Activated B cell treated with CpG ODN at 0.5 μM for 24 hours (primary cell): ENCODE measurements at regions of chr15 and their contacts with region 1.

Region 1: DNA sequence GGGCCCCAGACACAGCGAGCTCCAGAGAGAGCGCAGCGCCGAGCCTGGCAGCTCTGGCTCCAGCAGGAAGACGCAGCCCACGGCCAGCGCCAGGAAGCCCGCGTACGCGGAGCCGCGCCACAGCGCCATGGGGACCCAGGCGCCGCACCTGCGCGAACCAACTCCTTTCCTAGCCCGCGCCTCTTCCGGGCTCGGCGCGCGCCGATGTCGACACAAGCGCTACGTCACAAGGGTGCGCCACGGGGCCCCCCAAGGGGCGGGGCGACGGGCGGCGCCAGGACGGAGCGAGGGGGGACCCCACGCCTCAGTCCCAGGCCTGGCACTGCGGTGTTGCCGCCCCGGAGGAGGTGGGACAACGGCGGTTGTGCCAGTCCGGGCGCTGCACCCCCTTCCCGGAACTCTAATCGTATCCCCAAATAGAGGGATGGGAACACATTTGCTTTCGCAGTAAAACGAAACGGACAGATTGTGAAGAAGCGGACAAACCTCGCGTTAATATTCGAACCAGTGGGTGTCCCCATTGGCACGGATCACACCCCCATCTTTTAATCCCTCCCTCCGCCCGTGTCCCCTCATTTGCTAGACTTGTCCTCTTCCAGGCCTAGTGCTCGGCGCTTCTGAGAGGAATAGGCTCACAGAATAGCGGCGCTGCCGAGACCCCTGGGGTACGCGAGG is at the start of gene ADPGK:
- DNase-seq: peak; percentile 100
- ATAC-seq: peak; percentile 84
- H3K4me3 Mint-ChIP-seq: peak within 1 kb of the TSS; percentile 94
- H3K27ac Mint-ChIP-seq: peak within 1 kb of the TSS; percentile 99
- H3K4me1 Mint-ChIP-seq: peaks cover 46% of the 10 kb centered on the region
- H3K27me3 Mint-ChIP-seq: no peaks in the 10 kb centered on the region
- CTCF ChIP-seq: no peak
- total RNA-seq, gene ADPGK: 77.7 and 99.8 TPM in 2 replicates

Region 2: GRCh38 chr15:72272213-72273002 is 511.3 kb before region 1 on chr15 and contains the start of gene PARP6:
- CTCF ChIA-PET with region 1: no interaction called
- POLR2A ChIA-PET with region 1: no interaction called
- intact Hi-C with region 1: loop called (anchors 5 kb)
- DNase-seq: peak; percentile 95
- ATAC-seq: peak; percentile 96
- H3K4me3 Mint-ChIP-seq: peak within 1 kb of the TSS; percentile 87
- H3K27ac Mint-ChIP-seq: peak within 1 kb of the TSS; percentile 86
- H3K4me1 Mint-ChIP-seq: peaks cover 36% of the 10 kb centered on the region
- H3K27me3 Mint-ChIP-seq: no peaks in the 10 kb centered on the region
- CTCF ChIP-seq: no peak
- total RNA-seq, gene PARP6: 70.7 and 81.4 TPM in 2 replicates

Region 3: GRCh38 chr15:72685925-72686794 is 97.5 kb before region 1 on chr15 and contains the starts of genes BBS4 and HIGD2B:
- CTCF ChIA-PET with region 1: no interaction called
- POLR2A ChIA-PET with region 1: interaction called, 15 read pairs
- intact Hi-C with region 1: loop called (anchors 1 kb)
- DNase-seq: peak; percentile 83
- ATAC-seq: peak; percentile 93
- H3K4me3 Mint-ChIP-seq: peak within 1 kb of the TSS; percentile 97
- H3K27ac Mint-ChIP-seq: peak within 1 kb of the TSS; percentile 93
- H3K4me1 Mint-ChIP-seq: peaks cover 20% of the 10 kb centered on the region
- H3K27me3 Mint-ChIP-seq: no peaks in the 10 kb centered on the region
- CTCF ChIP-seq: no peak
- total RNA-seq, gene BBS4: 19.4 and 21.4 TPM in 2 replicates
- total RNA-seq, gene HIGD2B: 0.20 and 0.55 TPM in 2 replicates

Region 4: GRCh38 chr15:72770673-72771328 is 12.9 kb before region 1 on chr15:
- CTCF ChIA-PET with region 1: no interaction called
- POLR2A ChIA-PET with region 1: interaction called, 10 read pairs
- intact Hi-C with region 1: no loop called
- DNase-seq: no peak
- ATAC-seq: no peak
- H3K4me3 Mint-ChIP-seq: no peak overlapping the region
- H3K27ac Mint-ChIP-seq: no peak overlapping the region
- H3K4me1 Mint-ChIP-seq: peaks cover 30% of the 10 kb centered on the region
- H3K27me3 Mint-ChIP-seq: no peaks in the 10 kb centered on the region
- CTCF ChIP-seq: no peak

Region 5: DNA sequence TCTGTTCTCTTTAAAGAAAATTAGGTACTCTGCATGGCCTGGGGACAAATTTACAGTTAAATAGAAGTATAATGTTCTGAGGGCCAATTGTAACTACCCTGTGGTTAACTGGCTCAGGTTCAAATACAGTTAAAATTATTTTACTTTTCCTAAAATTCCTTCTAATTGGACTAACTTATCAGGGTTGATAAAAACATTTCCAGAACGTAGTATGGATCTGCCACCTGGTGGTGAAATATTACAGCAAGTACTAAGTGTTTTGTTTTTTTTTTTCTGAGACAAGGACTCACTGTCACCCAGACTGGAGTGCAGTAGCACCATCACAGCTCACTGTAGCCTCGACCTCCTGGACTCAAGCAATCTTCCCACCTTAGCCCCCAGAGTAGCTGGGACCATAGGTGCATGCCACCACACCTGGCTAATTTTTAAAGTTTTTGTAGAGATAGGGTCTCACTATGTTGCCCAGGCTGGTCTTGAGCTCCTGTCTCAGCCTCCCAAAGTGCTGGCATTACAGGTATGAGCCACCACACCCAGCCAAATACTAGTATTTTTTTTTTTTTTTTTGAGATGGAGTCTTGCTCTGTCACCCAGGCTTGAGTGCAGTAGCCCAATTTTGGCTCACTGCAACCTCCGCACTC is 297.7 kb after region 1 on chr15:
- CTCF ChIA-PET with region 1: no interaction called
- POLR2A ChIA-PET with region 1: no interaction called
- intact Hi-C with region 1: loop called (anchors 1 kb)
- DNase-seq: no peak
- ATAC-seq: no peak
- H3K4me3 Mint-ChIP-seq: no peak overlapping the region
- H3K27ac Mint-ChIP-seq: no peak overlapping the region
- H3K4me1 Mint-ChIP-seq: no peaks in the 10 kb centered on the region
- H3K27me3 Mint-ChIP-seq: peaks cover 5% of the 10 kb centered on the region
- CTCF ChIP-seq: no peak